Calu3 (cell line): ENCODE measurements at regions of chr16 and their contacts with region 1.

Region 1: GRCh38 chr16:22898874-22899348 is 84.9 kb downstream of the HS3ST2 start:
- DNase-seq: peak; percentile 86
- H3K4me3 Mint-ChIP-seq: no peak overlapping the region
- H3K27ac Mint-ChIP-seq: no peak overlapping the region
- H3K4me1 Mint-ChIP-seq: no peaks in the 10 kb centered on the region
- H3K27me3 Mint-ChIP-seq: peaks cover 17% of the 10 kb centered on the region
- CTCF ChIP-seq: peak; percentile 88

Region 2: GRCh38 chr16:23060458-23061320 is 161.8 kb after region 1 on chr16:
- CTCF ChIA-PET with region 1: interaction called, 12 read pairs
- intact Hi-C with region 1: loop called (anchors 1 kb)
- DNase-seq: peak; percentile 80
- H3K4me3 Mint-ChIP-seq: no peak overlapping the region
- H3K27ac Mint-ChIP-seq: no peak overlapping the region
- H3K4me1 Mint-ChIP-seq: no peaks in the 10 kb centered on the region
- H3K27me3 Mint-ChIP-seq: peaks cover 40% of the 10 kb centered on the region
- CTCF ChIP-seq: peak; percentile 84